Right ventricle myocardium inferior (tissue), 1 donor: ENCODE measurements at regions of chrX and their contacts with region 1.

Region 1: DNA sequence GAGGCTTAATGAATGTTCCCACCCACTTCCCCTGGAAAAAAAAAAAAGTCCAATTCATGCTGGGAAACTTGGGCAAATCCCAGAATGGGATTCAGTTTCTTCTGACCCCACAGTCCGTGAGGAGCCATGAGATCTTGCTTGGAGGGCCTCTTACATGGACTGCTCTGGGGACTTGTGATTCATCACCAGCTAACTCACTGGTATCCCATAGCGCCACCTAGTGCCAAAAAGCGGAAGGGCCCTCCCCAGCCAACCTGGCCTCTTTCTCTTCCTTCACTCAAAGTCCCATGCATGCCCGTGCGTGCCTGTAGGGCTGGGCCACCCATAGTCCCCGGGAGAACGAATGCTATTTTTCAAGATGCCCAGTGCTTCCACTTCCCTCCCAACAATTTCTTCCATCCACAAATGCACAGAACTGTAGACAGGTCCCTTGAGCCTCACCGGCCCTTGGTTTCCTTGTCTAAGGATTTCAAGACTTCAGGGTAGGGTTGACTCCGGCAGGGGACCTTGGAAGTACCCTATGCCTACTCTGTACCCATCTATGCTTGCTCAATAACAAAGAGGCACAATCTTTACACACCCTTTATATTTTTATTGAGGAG is 5.1 kb downstream of the RTL5 start:
- DNase-seq: peak; percentile 80
- ATAC-seq: peak; percentile 89

Region 2: GRCh38 chrX:71910986-71911730 is 215.5 kb before region 1 on chrX:
- intact Hi-C with region 1: loop called (anchors 10 kb)
- DNase-seq: no peak
- ATAC-seq: peak; percentile 54

Region 3: DNA sequence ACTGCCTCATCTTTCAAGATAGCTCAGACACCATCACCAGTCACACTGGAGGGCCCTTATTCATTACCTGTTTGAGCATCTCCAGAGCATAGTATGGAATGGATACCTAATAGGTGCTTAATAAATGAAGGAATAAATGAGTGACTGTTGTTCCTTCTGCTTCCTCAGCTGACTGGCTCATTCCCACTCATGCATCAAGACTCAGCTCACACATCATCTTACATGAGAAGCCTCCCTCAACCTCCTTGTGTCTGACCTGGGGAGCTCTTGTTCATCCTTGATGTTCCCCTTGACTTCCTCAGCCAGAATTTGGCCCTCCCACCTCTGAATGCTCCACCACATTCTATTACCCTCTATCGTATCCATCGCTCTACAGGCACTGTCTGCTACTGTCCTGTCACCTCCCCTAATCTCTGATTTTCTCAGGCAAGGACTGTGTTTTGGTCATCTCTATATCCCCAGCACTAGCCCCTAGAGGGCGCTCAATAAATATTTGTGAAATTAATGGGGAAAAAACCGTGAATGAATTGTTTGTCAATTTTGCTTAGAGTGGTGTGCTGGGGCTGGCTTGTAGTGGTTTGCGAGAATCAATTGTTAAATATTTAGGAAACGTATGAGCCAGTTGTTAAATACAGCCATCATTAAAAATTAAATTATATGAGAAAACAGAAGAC is 127.7 kb before region 1 on chrX:
- intact Hi-C with region 1: loop called (anchors 1 kb)
- DNase-seq: no peak
- ATAC-seq: no peak

Region 4: DNA sequence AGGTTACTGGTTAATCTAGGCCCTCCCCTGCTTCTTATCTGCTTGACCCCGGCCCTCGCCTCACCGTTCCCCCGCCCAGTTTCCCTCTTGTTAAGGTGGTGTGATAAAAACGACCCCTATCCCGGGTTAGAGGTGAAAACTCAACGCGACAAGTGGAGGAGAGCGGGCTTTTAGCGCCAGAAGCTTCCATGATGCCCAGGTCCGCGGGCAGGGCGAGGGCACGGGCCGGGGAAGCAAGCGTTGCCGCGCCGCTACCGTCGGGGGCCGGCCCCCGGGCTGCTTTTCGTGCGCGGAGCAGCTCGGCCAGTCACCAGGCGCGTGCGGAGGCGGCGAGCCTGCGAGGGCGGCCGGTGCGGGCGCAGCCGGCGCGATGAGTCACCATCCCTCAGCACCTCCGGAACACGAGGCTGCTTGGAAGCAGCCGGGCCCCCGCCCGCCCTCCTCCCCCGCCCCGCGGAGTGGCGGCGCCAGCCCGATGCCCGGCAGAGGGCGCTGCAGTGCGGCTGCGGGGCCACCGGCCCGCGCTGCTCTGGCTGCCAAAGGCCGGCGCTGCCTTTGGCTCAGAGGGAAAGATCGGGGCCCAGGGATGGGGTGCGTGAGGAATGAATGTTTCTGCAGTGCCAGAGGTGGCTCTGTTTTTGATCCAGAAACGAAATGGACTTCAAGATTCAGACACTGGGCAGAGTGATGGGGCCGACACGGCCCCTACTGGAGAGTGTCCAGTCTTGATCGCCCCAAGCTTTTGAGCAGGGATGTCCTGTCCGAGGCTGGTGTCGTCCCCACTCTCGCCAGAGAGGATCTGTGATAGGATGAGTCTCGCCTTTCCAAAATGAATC is 108.1 kb before region 1 on chrX:
- intact Hi-C with region 1: loop called (anchors 1 kb)
- DNase-seq: peak; percentile 91
- ATAC-seq: peak; percentile 98